ENCODE measurements at regions of chr16 and their contacts with region 1.

Region 1: GRCh38 chr16:74623214-74623842 is 16.4 kb upstream of the GLG1 start:
- DNase-seq: no peak
- ATAC-seq: peak; percentile 58

Region 2: GRCh38 chr16:74477226-74477625 is 146.1 kb before region 1 on chr16:
- intact Hi-C with region 1: loop called (anchors 10 kb)
- DNase-seq: no peak
- ATAC-seq: no peak

Region 3: GRCh38 chr16:74673876-74674275 is 50.5 kb after region 1 on chr16:
- intact Hi-C with region 1: no loop called
- DNase-seq: no peak
- ATAC-seq: no peak

Measured in left ventricle myocardium superior (tissue), 1 donor.